A673 (cell line): ENCODE measurements at regions of chrX and their contacts with region 1.

Region 1: DNA sequence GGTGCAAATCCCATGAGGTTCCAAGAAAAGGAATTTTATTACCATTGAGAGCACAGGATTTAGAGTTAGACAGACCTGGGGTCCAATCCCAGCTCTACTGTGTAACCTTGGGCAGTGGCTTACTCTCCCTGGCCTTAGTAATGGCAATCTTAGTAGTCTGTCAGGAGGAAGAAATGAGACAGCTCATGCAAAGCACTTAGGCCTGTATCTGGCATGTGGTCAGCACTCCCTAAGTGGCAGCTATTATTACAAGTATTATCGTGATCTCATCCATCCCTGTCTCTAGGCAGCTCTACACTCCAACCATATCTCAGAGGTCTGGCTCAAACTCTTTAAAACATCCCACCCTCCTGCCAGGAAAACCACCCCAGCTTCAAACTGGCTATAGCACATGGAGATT is 129.6 kb upstream of the NALF2 start:
- DNase-seq: no peak
- H3K4me3 ChIP-seq: no peak overlapping the region
- H3K27ac ChIP-seq: no peak overlapping the region
- H3K4me1 ChIP-seq: no peaks in the 10 kb centered on the region
- H3K27me3 ChIP-seq: no peaks in the 10 kb centered on the region
- CTCF ChIP-seq: no peak

Region 2: DNA sequence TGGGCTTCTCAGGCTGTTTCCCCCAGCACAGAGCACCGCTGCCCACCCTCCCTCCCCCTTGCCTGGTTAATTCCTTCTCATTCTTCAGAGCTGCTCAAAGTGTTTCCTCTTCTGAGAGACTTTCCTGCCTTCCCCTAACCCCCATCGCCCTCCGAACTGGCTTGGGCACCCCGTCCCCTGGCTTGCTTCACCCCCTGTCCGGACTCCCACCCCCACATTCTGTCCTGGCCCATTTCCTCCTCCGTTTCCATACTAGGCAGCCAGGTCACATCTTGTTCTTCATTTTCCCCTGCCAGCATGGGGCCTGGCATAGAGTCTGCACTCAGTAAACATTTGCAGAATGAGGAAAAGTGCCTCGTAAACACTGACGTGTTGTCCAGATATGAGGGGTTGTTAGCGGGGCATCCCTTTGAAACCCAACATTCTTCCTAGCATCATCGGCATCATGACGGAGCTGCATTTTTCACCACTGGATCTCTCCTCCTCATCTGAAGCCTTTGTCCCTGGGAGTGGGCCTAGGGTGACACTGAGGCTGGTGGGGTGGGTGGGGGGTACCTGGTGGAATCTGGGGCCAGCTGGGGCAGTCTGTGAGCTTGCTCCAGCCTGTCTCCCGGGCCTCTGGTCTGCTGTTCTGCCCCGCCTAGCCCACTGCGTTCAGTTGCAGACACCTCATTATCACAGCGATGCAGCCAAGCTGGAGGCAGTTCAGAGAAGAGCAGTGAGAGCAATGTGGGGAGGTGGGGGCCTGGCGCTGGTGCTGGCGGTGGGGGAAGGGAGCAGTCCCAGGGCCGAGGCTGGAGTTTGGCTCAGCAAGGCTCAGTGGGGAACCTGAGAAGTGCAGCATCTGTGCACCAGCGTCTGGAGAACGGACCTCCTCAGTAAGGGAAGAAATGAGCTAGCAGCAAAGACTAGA is 59.9 kb before region 1 on chrX:
- CTCF ChIA-PET with region 1: no interaction called
- POLR2A ChIA-PET with region 1: no interaction called
- intact Hi-C with region 1: loop called (anchors 5 kb)
- DNase-seq: no peak
- H3K4me3 ChIP-seq: no peak overlapping the region
- H3K27ac ChIP-seq: no peak overlapping the region
- H3K4me1 ChIP-seq: peaks cover 42% of the 10 kb centered on the region
- H3K27me3 ChIP-seq: no peaks in the 10 kb centered on the region
- CTCF ChIP-seq: no peak